ENCODE measurements at regions of chr15 and their contacts with region 1.

Region 1: GRCh38 chr15:23039151-23039916 is at the start of gene TUBGCP5:
- H3K4me3 ChIP-seq: peak within 1 kb of the TSS; percentile 89
- H3K27ac ChIP-seq: peak within 1 kb of the TSS; percentile 86; the same call in 1 of the 2 replicates
- H3K4me1 ChIP-seq: no peaks in the 10 kb centered on the region
- CTCF ChIP-seq: peak; percentile 53; the same call in 1 of the 2 replicates

Region 2: DNA sequence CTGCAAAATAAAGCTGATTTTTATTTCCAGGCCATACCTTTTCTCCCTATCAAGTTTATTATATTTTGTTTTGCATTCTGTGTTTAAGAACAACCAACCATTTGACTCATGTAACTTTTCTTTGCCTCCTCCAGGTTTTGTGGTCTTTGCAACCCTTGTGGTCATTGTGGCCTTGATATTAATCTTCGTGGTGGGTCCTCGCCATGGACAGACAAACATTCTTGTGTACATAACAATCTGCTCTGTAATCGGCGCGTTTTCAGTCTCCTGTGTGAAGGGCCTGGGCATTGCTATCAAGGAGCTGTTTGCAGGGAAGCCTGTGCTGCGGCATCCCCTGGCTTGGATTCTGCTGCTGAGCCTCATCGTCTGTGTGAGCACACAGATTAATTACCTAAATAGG is 173.3 kb before region 1 on chr15:
- CTCF ChIA-PET with region 1: no interaction called
- POLR2A ChIA-PET with region 1: no interaction called
- H3K4me3 ChIP-seq: no peak overlapping the region
- H3K27ac ChIP-seq: no peak overlapping the region
- H3K4me1 ChIP-seq: no peaks in the 10 kb centered on the region
- CTCF ChIP-seq: no peak

Region 3: GRCh38 chr15:22989576-22990477 is 49.5 kb before region 1 on chr15:
- CTCF ChIA-PET with region 1: no interaction called
- POLR2A ChIA-PET with region 1: no interaction called
- H3K4me3 ChIP-seq: no peak overlapping the region
- H3K27ac ChIP-seq: no peak overlapping the region
- H3K4me1 ChIP-seq: no peaks in the 10 kb centered on the region
- CTCF ChIP-seq: no peak

Region 4: GRCh38 chr15:23055316-23055715 is 16.0 kb after region 1 on chr15:
- CTCF ChIA-PET with region 1: interaction called, 14 read pairs
- POLR2A ChIA-PET with region 1: interaction called, 3 read pairs
- H3K4me3 ChIP-seq: no peak overlapping the region
- H3K27ac ChIP-seq: no peak overlapping the region
- H3K4me1 ChIP-seq: no peaks in the 10 kb centered on the region
- CTCF ChIP-seq: no peak